ENCODE measurements at regions of chr15 and their contacts with region 1.

Region 1: DNA sequence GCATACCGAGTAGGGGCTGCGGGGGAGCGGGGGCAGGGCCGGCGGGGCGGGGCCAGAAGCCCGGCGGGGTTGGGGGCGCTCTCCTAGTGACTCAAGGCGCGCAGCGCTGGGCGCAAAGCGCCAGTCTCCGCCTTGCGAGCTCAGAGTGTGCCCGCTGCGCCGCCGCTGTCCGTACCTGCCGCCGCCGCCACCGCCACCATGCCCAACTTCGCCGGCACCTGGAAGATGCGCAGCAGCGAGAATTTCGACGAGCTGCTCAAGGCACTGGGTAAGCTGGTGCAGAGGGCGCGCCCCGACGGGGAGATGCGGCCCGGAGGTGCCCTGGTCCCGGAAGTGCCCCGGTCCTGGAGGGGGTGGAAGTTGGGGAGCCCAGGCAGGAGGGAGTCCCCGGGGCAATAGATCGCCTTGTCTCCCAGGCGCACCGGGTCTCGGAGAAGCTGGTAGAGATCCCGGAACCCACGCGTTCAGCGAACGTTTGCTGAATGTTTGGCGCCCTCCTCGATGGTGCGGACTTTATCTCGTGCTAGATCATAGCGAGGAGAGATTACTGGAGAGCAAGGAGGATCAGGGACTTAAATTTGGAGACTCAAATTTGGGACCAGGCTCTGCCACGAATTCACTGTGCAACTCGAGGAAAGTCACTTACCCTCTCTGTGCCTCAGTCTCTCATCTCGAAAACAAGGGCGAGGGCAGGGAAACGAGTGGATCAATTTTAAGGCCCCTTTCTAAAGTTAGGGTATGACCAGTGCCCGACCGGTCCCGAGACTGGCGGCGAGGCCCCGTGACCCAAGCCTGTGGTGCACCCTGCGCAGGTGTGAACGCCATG is at the start of gene CRABP1:
- DNase-seq: peak; percentile 76
- ATAC-seq: peak; percentile 75
- H3K4me3 Mint-ChIP-seq: peak within 1 kb of the TSS; percentile 80
- H3K27ac Mint-ChIP-seq: no peak within 1 kb of the TSS
- H3K4me1 Mint-ChIP-seq: peaks cover 28% of the 10 kb centered on the region
- H3K27me3 Mint-ChIP-seq: peaks cover 32% of the 10 kb centered on the region
- CTCF ChIP-seq: no peak
- total RNA-seq, gene CRABP1: 374 to 444 TPM (median 377 TPM) in 3 replicates

Region 2: DNA sequence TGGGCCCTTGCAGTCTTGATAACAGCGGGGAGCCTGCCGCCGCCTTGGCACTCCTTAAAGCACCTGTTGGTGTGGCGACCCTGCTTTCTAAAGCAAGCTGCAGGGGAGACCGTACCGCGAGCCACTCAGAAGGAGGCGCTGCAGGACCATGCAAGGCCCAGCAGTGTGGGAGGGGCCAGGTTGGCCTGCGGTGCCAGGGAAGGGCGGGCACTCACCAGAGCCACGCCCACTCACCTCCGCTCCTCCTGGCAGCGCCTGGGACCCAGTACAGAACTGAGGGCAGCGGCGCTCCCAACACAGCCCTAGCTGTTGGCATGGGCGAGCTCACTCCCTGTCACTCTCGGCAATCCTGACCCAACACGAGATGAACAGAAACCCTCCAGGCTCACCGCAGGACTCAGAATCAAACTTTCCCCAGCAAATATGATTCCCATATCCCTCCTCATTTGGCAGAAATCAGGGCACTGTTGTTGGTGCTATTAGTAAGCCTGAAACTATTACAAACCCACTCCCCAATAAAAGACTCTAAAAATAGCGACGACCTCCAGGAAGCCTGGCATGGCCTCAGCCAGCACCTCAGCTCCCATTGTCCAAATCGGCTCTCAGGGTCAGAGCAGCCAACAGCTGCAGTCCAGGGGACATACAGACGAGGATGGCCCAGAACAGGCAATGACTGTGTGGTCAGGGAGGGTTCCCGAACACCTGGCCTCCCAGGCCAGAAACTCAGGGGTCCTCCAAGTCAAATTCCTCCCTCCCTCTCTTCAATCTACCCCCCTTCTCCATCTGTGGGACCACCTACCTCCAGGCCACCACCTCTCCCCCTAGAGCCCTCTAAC is 340.1 kb before region 1 on chr15:
- CTCF ChIA-PET with region 1: no interaction called
- POLR2A ChIA-PET with region 1: no interaction called
- DNase-seq: peak; percentile 97
- ATAC-seq: peak; percentile 99
- H3K4me3 Mint-ChIP-seq: no peak overlapping the region
- H3K27ac Mint-ChIP-seq: no peak overlapping the region; the same call in 1 of the 2 replicates
- H3K4me1 Mint-ChIP-seq: peaks cover 16% of the 10 kb centered on the region
- H3K27me3 Mint-ChIP-seq: no peaks in the 10 kb centered on the region
- CTCF ChIP-seq: peak; percentile 57

Region 3: DNA sequence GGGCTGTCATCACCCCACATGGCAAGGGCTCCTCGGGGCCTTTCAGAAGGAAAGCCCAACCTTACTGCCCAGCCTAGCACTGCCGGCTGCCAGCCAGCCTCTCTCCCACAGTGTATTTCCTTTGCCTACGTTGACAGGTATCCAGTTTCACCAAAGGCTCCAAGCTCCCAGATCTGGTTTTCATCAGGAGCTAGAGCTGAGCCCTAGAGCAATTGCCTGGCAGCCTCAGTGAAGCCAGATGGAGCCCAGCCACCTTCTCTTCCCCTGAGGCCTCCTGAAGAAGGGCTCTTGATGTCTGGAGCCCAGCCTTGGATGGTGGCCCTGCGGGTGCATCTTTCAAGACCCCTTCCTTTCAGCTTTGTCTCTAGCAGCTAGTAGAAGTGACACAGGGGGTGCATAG is 20.0 kb after region 1 on chr15:
- CTCF ChIA-PET with region 1: interaction called, 10 read pairs
- POLR2A ChIA-PET with region 1: no interaction called
- DNase-seq: no peak
- ATAC-seq: peak; percentile 43
- H3K4me3 Mint-ChIP-seq: no peak overlapping the region
- H3K27ac Mint-ChIP-seq: no peak overlapping the region
- H3K4me1 Mint-ChIP-seq: peaks cover 30% of the 10 kb centered on the region
- H3K27me3 Mint-ChIP-seq: no peaks in the 10 kb centered on the region
- CTCF ChIP-seq: no peak

Measured in WTC11 (cell line).